ENCODE measurements at regions of chr1 and their contacts with region 1.

Region 1: GRCh38 chr1:198598796-198599321 is 40.0 kb upstream of the PTPRC start:
- DNase-seq: peak; percentile 89
- ATAC-seq: peak; percentile 88
- H3K4me3 ChIP-seq: peak overlapping the region; percentile 24; the same call in 1 of the 2 replicates
- H3K27ac ChIP-seq: peak overlapping the region; percentile 81
- H3K4me1 ChIP-seq: peaks cover 27% of the 10 kb centered on the region
- H3K27me3 ChIP-seq: no peaks in the 10 kb centered on the region
- CTCF ChIP-seq: no peak
- EP300 ChIP-seq: peak; percentile 63 to 84; a peak in 3 of 4 replicates
- POLR2A ChIP-seq: no peak; the same call in 1 of the 2 replicates
- RAD21 ChIP-seq: no peak

Region 2: DNA sequence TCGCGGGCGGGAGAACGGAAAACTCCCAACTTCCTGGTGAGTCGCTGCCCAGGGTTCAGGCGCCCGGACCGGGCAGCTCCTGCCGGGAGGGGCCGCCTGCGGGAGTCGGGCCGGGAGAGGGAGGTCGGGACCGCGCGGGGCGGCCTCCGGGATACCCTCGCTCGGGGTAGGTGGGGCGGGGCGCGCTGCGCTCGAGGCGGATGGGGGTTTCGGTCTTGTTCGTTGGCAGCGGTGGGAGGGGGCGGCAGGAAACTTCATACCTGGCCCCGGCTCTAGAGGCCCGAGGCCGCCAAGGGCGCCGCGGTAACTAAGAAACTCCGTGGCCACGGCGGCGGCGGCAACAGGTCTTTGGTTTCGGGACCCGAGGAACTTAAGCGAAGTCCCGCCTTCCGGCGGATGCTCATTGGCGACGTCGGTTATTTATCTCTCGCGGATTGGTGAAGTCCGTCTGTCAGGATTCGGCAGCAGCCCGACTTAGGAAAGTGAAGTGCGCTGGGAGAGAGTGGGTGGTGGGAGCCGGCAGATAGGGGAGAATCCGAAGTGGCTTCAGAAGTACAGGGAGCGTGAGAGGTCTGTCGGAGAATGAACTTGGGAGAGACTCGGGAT is 441.5 kb before region 1 on chr1:
- CTCF ChIA-PET with region 1: no interaction called
- POLR2A ChIA-PET with region 1: interaction called, 3 read pairs
- RAD21 ChIA-PET with region 1: no interaction called
- SMC1A ChIA-PET with region 1: no interaction called
- in situ Hi-C with region 1: no loop called
- intact Hi-C with region 1: loop called (anchors 2 kb)
- DNase-seq: no peak
- ATAC-seq: peak; percentile 59
- H3K4me3 ChIP-seq: peak overlapping the region; percentile 95
- H3K27ac ChIP-seq: peak overlapping the region; percentile 91
- H3K4me1 ChIP-seq: peaks cover 12% of the 10 kb centered on the region; the same call in 1 of the 2 replicates
- H3K27me3 ChIP-seq: no peaks in the 10 kb centered on the region
- CTCF ChIP-seq: no peak
- EP300 ChIP-seq: no peak
- POLR2A ChIP-seq: peak; percentile 69
- RAD21 ChIP-seq: no peak

Region 3: DNA sequence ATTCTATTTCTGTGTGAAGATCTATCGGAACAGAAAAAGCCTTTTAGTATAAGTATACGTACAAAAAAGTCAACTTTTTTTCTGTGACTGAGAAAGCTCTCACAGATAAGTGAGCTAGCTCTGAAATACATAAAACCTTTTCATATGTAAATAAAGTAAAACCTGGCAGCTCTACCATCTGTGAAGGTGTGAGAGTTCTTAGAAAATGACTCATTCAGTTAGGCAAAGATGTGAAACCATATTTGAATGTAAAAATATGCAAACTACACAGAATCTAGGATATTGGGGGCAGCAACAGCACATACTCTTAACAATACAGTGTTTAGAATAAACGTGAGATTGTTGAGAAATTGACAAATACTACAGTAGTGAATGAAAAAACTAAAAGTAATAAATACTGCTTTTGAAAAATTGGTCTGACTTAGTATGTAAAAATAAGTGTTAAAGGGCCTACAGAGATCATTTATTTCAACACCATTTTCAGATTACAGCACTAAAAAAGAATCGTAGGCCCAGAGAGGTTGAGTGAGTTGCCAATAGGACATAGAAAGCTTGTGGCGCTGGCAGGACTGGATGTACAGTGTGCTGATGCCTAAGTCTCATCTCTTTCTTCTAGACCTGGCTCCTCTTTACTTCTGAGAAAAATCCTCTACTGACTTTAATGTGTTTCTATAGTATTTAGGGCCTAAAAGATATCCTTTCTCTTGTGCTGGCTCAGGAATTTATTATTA is 78.2 kb before region 1 on chr1:
- CTCF ChIA-PET with region 1: interaction called, 4 read pairs
- POLR2A ChIA-PET with region 1: no interaction called
- RAD21 ChIA-PET with region 1: interaction called, 7 read pairs
- SMC1A ChIA-PET with region 1: interaction called, 10 read pairs
- in situ Hi-C with region 1: no loop called
- intact Hi-C with region 1: loop called (anchors 5 kb)
- DNase-seq: peak; percentile 55
- ATAC-seq: peak; percentile 91
- H3K4me3 ChIP-seq: no peak overlapping the region
- H3K27ac ChIP-seq: no peak overlapping the region
- H3K4me1 ChIP-seq: peaks cover 18% of the 10 kb centered on the region
- H3K27me3 ChIP-seq: no peaks in the 10 kb centered on the region; a peak in 1 of 4 replicates
- CTCF ChIP-seq: no peak
- EP300 ChIP-seq: peak in 1 of 2 experiments; percentile 71; a peak in 2 of 4 replicates
- POLR2A ChIP-seq: no peak
- RAD21 ChIP-seq: no peak

Region 4: GRCh38 chr1:198556971-198557370 is 41.9 kb before region 1 on chr1:
- CTCF ChIA-PET with region 1: interaction called, 3 read pairs
- POLR2A ChIA-PET with region 1: interaction called, 6 read pairs
- RAD21 ChIA-PET with region 1: interaction called, 6 read pairs
- SMC1A ChIA-PET with region 1: interaction called, 13 read pairs
- in situ Hi-C with region 1: no loop called
- intact Hi-C with region 1: no loop called
- DNase-seq: peak; percentile 71
- ATAC-seq: peak; percentile 95
- H3K4me3 ChIP-seq: no peak overlapping the region
- H3K27ac ChIP-seq: no peak overlapping the region; the same call in 1 of the 2 replicates
- H3K4me1 ChIP-seq: peaks cover 4% of the 10 kb centered on the region; the same call in 1 of the 2 replicates
- H3K27me3 ChIP-seq: no peaks in the 10 kb centered on the region
- CTCF ChIP-seq: no peak
- EP300 ChIP-seq: 0 out of 4 replicates have a peak, but pooled peaks of 1 of the 2 experiments have one; percentile 43
- POLR2A ChIP-seq: no peak
- RAD21 ChIP-seq: 0 out of 2 replicates have a peak, but pooled peaks have one; percentile 13

Region 5: DNA sequence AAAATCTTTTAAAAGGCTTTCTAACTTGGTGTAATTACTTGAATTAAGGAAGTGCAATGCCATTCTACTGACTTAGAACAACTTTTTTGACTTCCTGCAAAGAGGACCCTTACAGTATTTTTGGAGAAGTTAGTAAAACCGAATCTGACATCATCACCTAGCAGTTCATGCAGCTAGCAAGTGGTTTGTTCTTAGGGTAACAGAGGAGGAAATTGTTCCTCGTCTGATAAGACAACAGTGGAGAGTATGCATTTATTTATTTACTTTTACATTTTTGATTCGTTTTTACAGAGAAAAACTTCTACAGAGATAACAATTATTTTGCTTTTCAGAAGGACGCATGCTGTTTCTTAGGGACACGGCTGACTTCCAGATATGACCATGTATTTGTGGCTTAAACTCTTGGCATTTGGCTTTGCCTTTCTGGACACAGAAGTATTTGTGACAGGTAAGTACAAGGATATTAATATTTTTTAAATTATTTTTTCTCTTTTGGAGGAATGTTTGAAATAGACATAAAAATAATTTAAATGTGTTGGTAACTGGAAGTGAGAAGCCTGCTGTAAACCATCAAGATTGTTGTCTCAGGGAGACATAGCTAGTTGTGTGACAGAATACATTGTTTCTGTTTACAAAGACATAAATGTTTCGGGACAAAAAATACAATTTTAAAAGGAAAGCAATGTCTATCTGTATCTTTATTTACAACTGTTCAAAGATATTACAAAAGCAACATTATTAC is 40.2 kb after region 1 on chr1 and contains the start of gene PTPRC:
- CTCF ChIA-PET with region 1: interaction called, 10 read pairs
- POLR2A ChIA-PET with region 1: interaction called, 4 read pairs
- RAD21 ChIA-PET with region 1: interaction called, 44 read pairs
- SMC1A ChIA-PET with region 1: interaction called, 46 read pairs
- in situ Hi-C with region 1: no loop called
- intact Hi-C with region 1: loop called (anchors 1 kb)
- DNase-seq: peak; percentile 74
- ATAC-seq: peak; percentile 82
- H3K4me3 ChIP-seq: peak within 1 kb of the TSS; percentile 69
- H3K27ac ChIP-seq: peak within 1 kb of the TSS; percentile 68
- H3K4me1 ChIP-seq: peaks cover 13% of the 10 kb centered on the region
- H3K27me3 ChIP-seq: no peaks in the 10 kb centered on the region
- CTCF ChIP-seq: no peak
- EP300 ChIP-seq: peak in 1 of 2 experiments; percentile 75; a peak in 2 of 4 replicates
- POLR2A ChIP-seq: no peak
- RAD21 ChIP-seq: peak; percentile 24; the same call in 1 of the 2 replicates
- polyA plus RNA-seq, gene PTPRC: 72.9 to 73.6 TPM

Region 6: DNA sequence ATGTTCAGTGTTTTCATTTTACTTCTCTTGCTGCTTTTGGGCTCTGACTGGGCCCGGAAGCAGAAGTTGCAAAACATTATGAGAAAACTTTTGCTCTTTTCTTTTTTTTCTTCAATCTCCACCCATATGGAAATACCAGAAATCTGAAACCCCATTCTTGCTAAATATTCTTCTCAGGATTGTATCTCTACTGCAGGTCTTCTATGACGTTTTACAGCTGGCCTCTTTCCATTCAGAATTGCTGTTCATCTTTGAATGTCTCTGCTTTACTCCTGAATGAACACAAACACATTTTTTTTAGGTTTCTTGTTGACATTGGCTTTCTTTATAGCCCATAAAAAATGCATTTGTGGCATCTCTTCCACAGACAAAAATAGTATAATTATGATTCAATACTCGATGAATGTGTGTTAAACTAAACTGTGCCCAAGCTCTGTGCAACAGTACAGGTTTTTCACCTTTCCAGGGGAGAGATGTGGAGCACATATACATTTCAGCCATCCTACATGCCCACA is 58.7 kb after region 1 on chr1:
- CTCF ChIA-PET with region 1: no interaction called
- POLR2A ChIA-PET with region 1: interaction called, 7 read pairs
- RAD21 ChIA-PET with region 1: interaction called, 11 read pairs
- SMC1A ChIA-PET with region 1: interaction called, 8 read pairs
- in situ Hi-C with region 1: no loop called
- intact Hi-C with region 1: no loop called
- DNase-seq: no peak
- ATAC-seq: peak; percentile 18
- H3K4me3 ChIP-seq: peak overlapping the region; percentile 9; the same call in 1 of the 2 replicates
- H3K27ac ChIP-seq: peak overlapping the region; percentile 74
- H3K4me1 ChIP-seq: peaks cover 32% of the 10 kb centered on the region
- H3K27me3 ChIP-seq: no peaks in the 10 kb centered on the region
- CTCF ChIP-seq: no peak
- EP300 ChIP-seq: no peak
- POLR2A ChIP-seq: no peak
- RAD21 ChIP-seq: no peak

Region 7: GRCh38 chr1:198837278-198838021 is 238.6 kb after region 1 on chr1:
- CTCF ChIA-PET with region 1: no interaction called
- POLR2A ChIA-PET with region 1: no interaction called
- RAD21 ChIA-PET with region 1: no interaction called
- SMC1A ChIA-PET with region 1: no interaction called
- in situ Hi-C with region 1: no loop called
- intact Hi-C with region 1: no loop called
- DNase-seq: no peak
- ATAC-seq: peak; percentile 58
- H3K4me3 ChIP-seq: no peak overlapping the region
- H3K27ac ChIP-seq: no peak overlapping the region
- H3K4me1 ChIP-seq: no peaks in the 10 kb centered on the region
- H3K27me3 ChIP-seq: no peaks in the 10 kb centered on the region
- CTCF ChIP-seq: no peak
- EP300 ChIP-seq: no peak
- POLR2A ChIP-seq: no peak
- RAD21 ChIP-seq: no peak

Measured in GM12878 (cell line).